WTC11 (cell line): ENCODE measurements at regions of chr16 and their contacts with region 1.

Region 1: GRCh38 chr16:55842369-55843104 is 9.6 kb upstream of the CES1 start:
- DNase-seq: no peak
- ATAC-seq: peak; percentile 75
- H3K4me3 Mint-ChIP-seq: no peak overlapping the region
- H3K27ac Mint-ChIP-seq: no peak overlapping the region
- H3K4me1 Mint-ChIP-seq: peaks cover 7% of the 10 kb centered on the region; the same call in 1 of the 2 replicates
- H3K27me3 Mint-ChIP-seq: no peaks in the 10 kb centered on the region
- CTCF ChIP-seq: peak; percentile 63

Region 2: DNA sequence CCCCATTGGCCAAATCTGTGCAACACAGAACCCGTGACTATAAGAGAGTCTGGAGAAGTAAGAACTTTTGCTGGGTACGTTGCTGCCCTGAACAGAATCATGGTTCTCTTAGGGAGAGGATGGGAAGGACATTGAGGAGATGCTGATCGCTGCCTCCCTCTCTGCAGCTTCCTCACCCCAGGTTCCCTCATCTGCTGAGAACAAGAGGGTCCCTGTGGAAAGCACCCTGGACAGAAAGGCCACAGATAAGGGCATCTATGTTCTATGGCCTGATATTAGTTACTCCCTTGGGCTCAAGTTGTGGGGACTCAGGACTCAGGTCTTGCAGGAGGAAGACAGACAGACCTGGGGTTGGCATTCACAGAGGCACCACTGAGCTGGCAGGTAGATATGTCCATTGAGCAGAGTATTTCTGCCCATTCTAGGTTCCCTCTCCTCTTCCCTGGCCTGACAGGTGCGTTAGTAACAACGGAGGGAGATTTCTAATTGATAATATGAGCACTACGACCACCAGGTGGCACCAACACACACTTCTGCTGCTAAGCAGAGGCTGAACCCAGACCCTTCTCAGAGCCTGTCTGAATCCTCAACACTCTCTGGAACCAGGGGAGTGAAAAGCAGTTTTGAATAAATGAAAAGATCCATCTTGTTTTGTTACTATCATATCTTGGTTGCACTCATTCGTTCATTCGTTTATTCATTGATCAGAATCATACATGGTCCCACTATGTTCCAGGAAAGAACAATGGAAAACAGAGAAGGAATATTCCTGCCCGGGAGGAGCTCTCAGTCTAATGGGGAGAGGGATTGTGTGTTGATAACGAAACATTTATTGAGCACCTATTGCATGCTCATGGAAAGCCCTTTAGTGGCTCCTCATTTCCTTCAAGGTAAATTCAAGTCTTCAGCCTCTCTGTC is 130.3 kb before region 1 on chr16:
- CTCF ChIA-PET with region 1: interaction called, 21 read pairs
- POLR2A ChIA-PET with region 1: no interaction called
- DNase-seq: peak; percentile 76
- ATAC-seq: peak; percentile 91
- H3K4me3 Mint-ChIP-seq: no peak overlapping the region
- H3K27ac Mint-ChIP-seq: no peak overlapping the region
- H3K4me1 Mint-ChIP-seq: 0 out of 2 replicates have a peak, but pooled peaks cover 4% of the 10 kb centered on the region
- H3K27me3 Mint-ChIP-seq: no peaks in the 10 kb centered on the region
- CTCF ChIP-seq: 0 out of 2 replicates have a peak, but pooled peaks have one; percentile 26

Region 3: DNA sequence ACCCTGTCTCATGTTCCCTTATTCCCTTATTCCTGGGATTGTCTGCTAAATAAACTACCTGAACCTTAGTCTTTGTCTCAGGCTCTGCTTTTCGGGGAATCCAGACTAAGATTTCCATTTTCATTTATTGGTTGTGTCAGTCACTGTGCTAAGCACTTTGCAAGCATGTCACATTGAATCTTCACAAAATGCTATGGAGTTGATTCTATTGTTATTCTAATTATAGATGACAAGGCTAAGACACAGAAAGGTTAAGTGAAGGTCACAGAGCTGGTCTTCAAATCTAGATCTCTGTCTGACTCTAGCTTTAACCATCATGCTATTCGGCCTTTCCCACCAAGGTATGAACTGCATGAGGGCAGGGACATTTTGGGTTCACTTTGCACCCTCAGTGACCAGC is 46.0 kb after region 1 on chr16:
- CTCF ChIA-PET with region 1: no interaction called
- POLR2A ChIA-PET with region 1: no interaction called
- DNase-seq: no peak
- ATAC-seq: no peak
- H3K4me3 Mint-ChIP-seq: no peak overlapping the region
- H3K27ac Mint-ChIP-seq: no peak overlapping the region
- H3K4me1 Mint-ChIP-seq: peaks cover 8% of the 10 kb centered on the region
- H3K27me3 Mint-ChIP-seq: peaks cover 6% of the 10 kb centered on the region
- CTCF ChIP-seq: no peak